MCF 10A (cell line): ENCODE measurements at regions of chr5 and their contacts with region 1.

Region 1: GRCh38 chr5:170747851-170748250 is 35.7 kb upstream of the GABRP start:
- DNase-seq: peak; percentile 51
- H3K4me3 Mint-ChIP-seq: no peak overlapping the region
- H3K27ac Mint-ChIP-seq: no peak overlapping the region
- H3K4me1 Mint-ChIP-seq: peaks cover 26% of the 10 kb centered on the region
- H3K27me3 Mint-ChIP-seq: no peaks in the 10 kb centered on the region
- CTCF ChIP-seq: peak; percentile 25

Region 2: GRCh38 chr5:170712721-170713120 is 35.1 kb before region 1 on chr5:
- CTCF ChIA-PET with region 1: interaction called, 24 read pairs
- POLR2A ChIA-PET with region 1: no interaction called
- intact Hi-C with region 1: no loop called
- DNase-seq: no peak
- H3K4me3 Mint-ChIP-seq: no peak overlapping the region
- H3K27ac Mint-ChIP-seq: no peak overlapping the region
- H3K4me1 Mint-ChIP-seq: no peaks in the 10 kb centered on the region
- H3K27me3 Mint-ChIP-seq: peaks cover 44% of the 10 kb centered on the region
- CTCF ChIP-seq: no peak

Region 3: DNA sequence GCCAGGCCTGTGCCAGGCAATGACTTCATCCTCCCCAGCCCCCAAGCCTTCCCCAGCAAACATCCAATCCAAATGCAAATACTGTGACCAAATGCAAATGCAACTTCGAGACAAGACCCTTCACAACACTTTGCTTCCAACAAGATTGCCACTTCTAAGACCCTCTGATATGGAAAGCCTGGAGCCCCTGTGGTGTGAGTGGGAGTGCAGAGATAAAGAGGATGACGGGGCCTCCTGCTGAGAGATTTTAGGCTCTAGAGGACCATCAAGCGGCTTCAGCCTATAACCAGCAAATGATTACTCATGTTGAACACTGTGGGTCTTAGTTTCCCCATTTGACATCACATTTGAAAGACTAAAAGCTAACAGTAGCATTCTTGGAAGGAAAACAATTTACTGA is 10.9 kb before region 1 on chr5:
- CTCF ChIA-PET with region 1: interaction called, 28 read pairs
- POLR2A ChIA-PET with region 1: interaction called, 3 read pairs
- intact Hi-C with region 1: no loop called
- DNase-seq: no peak
- H3K4me3 Mint-ChIP-seq: no peak overlapping the region
- H3K27ac Mint-ChIP-seq: no peak overlapping the region
- H3K4me1 Mint-ChIP-seq: no peaks in the 10 kb centered on the region
- H3K27me3 Mint-ChIP-seq: peaks cover 16% of the 10 kb centered on the region
- CTCF ChIP-seq: no peak

Region 4: GRCh38 chr5:170782438-170782837 is 34.6 kb after region 1 on chr5:
- CTCF ChIA-PET with region 1: interaction called, 992 read pairs
- POLR2A ChIA-PET with region 1: interaction called, 3 read pairs
- intact Hi-C with region 1: no loop called
- DNase-seq: peak; percentile 32
- H3K4me3 Mint-ChIP-seq: no peak overlapping the region
- H3K27ac Mint-ChIP-seq: no peak overlapping the region
- H3K4me1 Mint-ChIP-seq: no peaks in the 10 kb centered on the region
- H3K27me3 Mint-ChIP-seq: no peaks in the 10 kb centered on the region
- CTCF ChIP-seq: no peak

Region 5: GRCh38 chr5:170809551-170809950 is 61.7 kb after region 1 on chr5:
- CTCF ChIA-PET with region 1: interaction called, 37 read pairs
- POLR2A ChIA-PET with region 1: no interaction called
- intact Hi-C with region 1: no loop called
- DNase-seq: peak; percentile 75
- H3K4me3 Mint-ChIP-seq: no peak overlapping the region
- H3K27ac Mint-ChIP-seq: no peak overlapping the region
- H3K4me1 Mint-ChIP-seq: no peaks in the 10 kb centered on the region
- H3K27me3 Mint-ChIP-seq: no peaks in the 10 kb centered on the region
- CTCF ChIP-seq: peak; percentile 87

Region 6: DNA sequence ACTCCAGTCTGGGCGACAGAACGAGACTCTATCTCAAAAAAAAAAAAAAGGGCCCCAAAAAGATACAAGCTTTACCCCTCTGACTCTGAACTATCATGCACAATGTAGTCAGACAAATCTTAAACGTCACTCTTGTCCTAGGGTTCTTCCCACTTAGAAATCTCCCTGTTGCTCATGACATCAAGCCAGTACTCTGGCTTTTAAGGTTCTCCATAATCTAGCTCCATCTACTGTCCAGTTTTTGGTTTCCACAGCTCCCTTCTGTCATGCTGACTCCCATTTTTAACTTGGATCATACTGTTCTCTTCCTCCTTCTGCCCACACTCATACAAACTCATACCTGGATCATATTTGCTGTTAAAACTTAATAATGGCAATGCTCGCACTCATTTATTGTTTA is 404.5 kb after region 1 on chr5:
- CTCF ChIA-PET with region 1: interaction called, 3 read pairs
- POLR2A ChIA-PET with region 1: no interaction called
- intact Hi-C with region 1: loop called (anchors 10 kb)
- DNase-seq: peak; percentile 47
- H3K4me3 Mint-ChIP-seq: no peak overlapping the region
- H3K27ac Mint-ChIP-seq: no peak overlapping the region
- H3K4me1 Mint-ChIP-seq: no peaks in the 10 kb centered on the region
- H3K27me3 Mint-ChIP-seq: no peaks in the 10 kb centered on the region
- CTCF ChIP-seq: no peak